Cardiac septum (tissue), 1 donor: ENCODE measurements at regions of chr18 and their contacts with region 1.

Region 1: DNA sequence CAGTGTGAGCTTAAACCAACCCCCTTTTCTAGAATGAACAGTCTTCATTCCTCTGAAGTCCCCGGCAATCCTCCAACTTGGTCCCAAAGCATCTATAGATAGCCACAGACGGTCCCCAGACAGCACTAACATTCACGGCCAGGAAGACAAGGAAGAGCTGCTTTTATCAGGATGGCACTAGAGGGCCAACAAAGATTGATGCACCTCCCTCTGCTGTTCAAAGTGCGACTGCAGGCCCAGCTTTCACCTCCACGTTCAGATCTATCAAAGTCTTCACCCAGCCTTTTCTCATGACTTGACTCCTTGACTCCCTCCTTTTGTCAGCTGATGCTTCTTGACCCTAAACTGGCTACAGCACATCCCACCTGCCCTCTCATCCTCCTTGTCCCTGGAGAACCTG is 54.3 kb downstream of the RNF152 start:
- DNase-seq: no peak

Region 2: DNA sequence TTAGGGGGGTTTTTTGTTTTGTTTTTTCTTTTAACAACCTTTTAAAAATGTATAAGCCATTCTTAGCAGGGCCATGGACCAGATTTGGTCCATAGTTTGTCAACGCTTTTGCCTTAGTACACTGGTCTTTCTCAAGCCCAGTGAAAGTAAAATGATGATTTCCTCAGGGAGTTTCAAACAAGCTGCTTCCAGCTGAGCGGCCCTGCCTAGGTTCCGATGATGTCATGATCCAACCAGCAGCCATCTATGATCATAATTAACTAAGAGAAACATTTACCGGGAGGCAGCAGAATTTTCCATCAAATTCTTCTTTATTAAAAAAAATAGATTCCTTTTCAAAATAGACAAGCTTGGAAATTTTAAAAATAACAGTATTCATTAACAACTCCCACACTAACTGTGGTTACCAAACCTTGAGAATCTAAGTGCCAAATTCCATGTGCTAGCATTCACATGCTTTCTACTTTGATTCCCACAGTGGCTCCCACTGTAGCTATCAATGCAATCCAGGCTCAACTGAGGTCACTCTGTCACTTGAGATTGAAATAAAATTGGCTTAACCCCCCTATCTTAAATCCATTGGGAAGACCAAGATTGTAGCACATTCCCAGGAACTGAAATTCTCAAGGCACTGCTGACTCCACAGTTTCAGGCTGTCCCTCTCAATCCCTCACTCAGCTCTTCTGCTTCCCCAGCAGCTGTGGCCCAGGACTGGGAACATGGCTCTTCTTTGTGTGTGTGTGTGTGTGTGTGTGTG is 94.6 kb before region 1 on chr18:
- intact Hi-C with region 1: loop called (anchors 5 kb)
- DNase-seq: no peak